Activated T-helper 1 cell treated with anti-CD3 and anti-CD28 coated beads, Interleukin-12 subunit alpha, Interleukin-12 subunit beta, Interleukin-2, Interleukin-4 antibody, amounts not matched to agents 30 ng/mL and 10 ng/mL and 1 ng/mL, durations not matched to agents 14 hours and 24 hours and 36 hours (primary cell): ENCODE measurements at regions of chr2 and their contacts with region 1.

Region 1: DNA sequence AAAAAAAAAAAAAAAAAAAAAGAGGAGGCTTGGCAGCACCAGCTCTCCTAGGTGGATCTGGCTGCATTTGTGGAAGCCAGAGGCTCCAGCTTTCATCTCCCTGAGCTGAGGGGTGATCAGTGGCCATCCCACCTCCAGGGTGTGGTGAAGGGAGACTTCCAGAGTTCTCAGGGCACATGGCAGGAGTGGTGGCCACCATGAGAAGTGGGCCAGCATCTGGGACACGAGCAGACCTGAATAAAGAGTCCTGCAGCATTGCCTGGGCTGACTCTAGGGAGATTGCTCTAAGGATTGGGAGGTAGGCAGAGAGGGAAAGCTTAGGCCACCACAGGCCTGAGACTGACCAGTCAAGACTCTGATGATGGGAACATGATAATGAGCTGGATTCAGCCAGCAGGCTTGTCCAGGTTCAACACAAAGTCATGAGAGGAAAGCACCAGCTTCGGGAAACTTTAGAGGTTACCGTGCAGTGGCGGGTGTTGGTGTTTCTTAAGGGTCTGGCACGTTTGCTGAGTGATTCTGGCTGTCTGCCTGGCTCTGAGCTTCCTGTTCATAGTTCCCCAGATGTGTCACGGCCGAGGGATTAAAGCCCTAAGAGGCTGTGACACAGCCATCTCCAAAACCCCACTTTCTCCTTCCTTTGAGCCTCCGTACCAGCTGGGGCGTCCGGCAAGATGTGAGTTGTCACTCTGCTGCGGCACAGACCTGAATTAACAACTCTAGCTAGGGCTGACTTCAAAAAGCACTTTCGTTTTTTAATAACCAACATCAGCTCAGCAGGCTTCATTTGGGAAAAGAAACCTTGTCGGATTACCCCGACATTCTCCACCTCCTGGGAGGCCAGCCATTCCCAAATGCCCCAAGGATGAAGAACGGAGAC is 38.3 kb upstream of the IL1R1 start:
- DNase-seq: peak; percentile 22
- H3K4me3 Mint-ChIP-seq: peak overlapping the region; percentile 72
- H3K27ac Mint-ChIP-seq: peak overlapping the region; percentile 13
- H3K4me1 Mint-ChIP-seq: peaks cover 24% of the 10 kb centered on the region
- H3K27me3 Mint-ChIP-seq: peaks cover 17% of the 10 kb centered on the region

Region 2: DNA sequence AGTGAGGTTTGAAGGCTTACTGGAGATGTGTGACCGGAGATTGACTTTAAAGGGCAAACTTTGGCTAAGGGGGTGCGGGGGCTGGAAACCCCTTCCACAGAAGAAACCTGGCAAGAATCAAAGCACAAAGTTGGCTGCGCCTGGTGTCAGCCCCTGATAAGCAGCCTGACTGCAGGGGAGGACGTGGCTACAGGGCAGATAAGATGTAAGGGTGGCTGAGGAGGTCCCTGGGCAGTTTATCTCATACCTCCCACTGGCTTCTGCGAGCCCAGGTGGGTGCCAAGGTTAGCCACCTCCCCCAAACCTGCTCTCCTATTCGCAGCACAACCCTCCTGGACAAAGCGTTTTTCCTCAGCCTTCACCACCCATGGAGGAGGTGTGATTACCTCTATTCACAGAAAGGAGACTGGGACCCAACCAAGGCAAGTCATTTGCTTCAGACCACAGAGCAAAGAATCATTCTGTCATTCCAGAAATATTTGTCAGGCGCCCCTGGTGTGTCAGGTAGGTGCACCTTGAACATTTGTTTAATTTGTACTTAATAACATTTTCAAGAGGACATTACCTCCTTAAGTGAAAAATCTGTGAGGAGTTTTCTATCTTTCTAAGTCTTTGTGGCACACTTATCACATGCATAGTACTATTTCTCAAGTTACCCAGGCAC is 34.8 kb before region 1 on chr2:
- intact Hi-C with region 1: no loop called
- DNase-seq: no peak
- H3K4me3 Mint-ChIP-seq: no peak overlapping the region
- H3K27ac Mint-ChIP-seq: no peak overlapping the region
- H3K4me1 Mint-ChIP-seq: peaks cover 10% of the 10 kb centered on the region
- H3K27me3 Mint-ChIP-seq: peaks cover 4% of the 10 kb centered on the region

Region 3: DNA sequence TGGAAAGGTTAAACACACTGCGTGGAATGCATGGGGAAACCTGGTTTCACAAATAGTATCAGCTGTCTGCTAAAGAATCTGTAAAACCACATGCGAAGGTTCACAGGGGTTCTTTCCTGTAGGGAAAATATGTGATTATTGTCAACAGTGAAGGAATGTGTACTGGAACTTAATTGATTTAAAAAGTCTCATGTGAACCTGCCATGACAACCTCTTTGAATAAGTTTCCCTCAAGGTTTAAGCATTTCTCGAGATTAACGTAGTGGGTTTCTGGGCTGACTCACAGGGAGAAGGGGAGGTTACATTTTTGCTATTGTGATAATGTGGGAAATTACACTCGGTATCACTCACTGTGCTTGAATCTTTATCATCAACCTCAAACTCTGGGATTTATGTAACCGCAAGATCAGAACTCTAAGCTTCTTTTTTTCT is 10.1 kb after region 1 on chr2:
- intact Hi-C with region 1: loop called (anchors 1 kb)
- DNase-seq: no peak
- H3K4me3 Mint-ChIP-seq: no peak overlapping the region
- H3K27ac Mint-ChIP-seq: no peak overlapping the region
- H3K4me1 Mint-ChIP-seq: peaks cover 32% of the 10 kb centered on the region
- H3K27me3 Mint-ChIP-seq: peaks cover 15% of the 10 kb centered on the region